A549 (cell line): ENCODE measurements at regions of chr10 and their contacts with region 1.

Region 1: GRCh38 chr10:103244663-103245271 is 920 bp upstream of the RPEL1 start:
- DNase-seq: peak; percentile 90 to 94
- ATAC-seq: peak; percentile 36 to 57; a peak in 4 of 6 replicates
- H3K4me3 ChIP-seq: no peak overlapping the region
- H3K27ac ChIP-seq: peak overlapping the region; percentile 96 to 100
- H3K4me1 ChIP-seq: peaks cover 40% of the 10 kb centered on the region
- CTCF ChIP-seq: peak; percentile 84
- EP300 ChIP-seq: no peak
- POLR2A ChIP-seq: no peak
- RAD21 ChIP-seq: peak; percentile 95 to 98

Region 2: GRCh38 chr10:103086261-103086660 is 158.5 kb before region 1 on chr10:
- CTCF ChIA-PET with region 1: interaction called, 27 read pairs
- POLR2A ChIA-PET with region 1: interaction called, 6 read pairs
- DNase-seq: no peak
- ATAC-seq: no peak
- H3K4me3 ChIP-seq: no peak overlapping the region
- H3K27ac ChIP-seq: no peak overlapping the region
- H3K4me1 ChIP-seq: no peaks in the 10 kb centered on the region
- CTCF ChIP-seq: no peak
- EP300 ChIP-seq: no peak
- POLR2A ChIP-seq: no peak
- RAD21 ChIP-seq: no peak

Region 3: DNA sequence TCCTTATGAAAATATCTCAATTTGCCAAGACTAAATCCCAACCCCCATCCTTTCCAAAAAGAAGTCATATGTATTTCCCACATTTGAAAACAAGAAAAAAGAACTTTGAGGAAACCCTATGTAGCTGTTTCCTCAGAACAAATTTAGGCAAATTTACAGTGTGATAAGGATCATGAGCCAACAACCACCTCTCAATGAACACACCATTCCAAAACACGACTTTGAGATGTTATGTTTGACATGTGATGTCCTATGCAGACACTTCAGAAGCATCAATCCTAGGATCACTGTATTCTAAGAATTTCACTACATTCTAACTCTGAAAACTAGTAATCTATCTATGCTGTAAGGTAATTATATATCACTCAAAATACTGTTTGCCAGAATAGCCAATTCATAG is 113.9 kb before region 1 on chr10:
- CTCF ChIA-PET with region 1: interaction called, 14 read pairs
- POLR2A ChIA-PET with region 1: no interaction called
- DNase-seq: no peak
- ATAC-seq: no peak; a peak in 1 of 6 replicates
- H3K4me3 ChIP-seq: no peak overlapping the region
- H3K27ac ChIP-seq: 0 out of 6 replicates have a peak overlapping the region, but pooled peaks of 1 of the 2 experiments have one; percentile 2
- H3K4me1 ChIP-seq: peaks cover 18% of the 10 kb centered on the region; the same call in 2 of the 3 replicates
- CTCF ChIP-seq: no peak
- EP300 ChIP-seq: no peak
- POLR2A ChIP-seq: no peak
- RAD21 ChIP-seq: no peak

Region 4: GRCh38 chr10:103175580-103176285 is 69.0 kb before region 1 on chr10:
- CTCF ChIA-PET with region 1: interaction called, 20 read pairs
- POLR2A ChIA-PET with region 1: interaction called, 3 read pairs
- DNase-seq: no peak
- ATAC-seq: peak; percentile 57 to 67
- H3K4me3 ChIP-seq: no peak overlapping the region
- H3K27ac ChIP-seq: peak overlapping the region in 1 of 2 experiments; percentile 50; a peak in 3 of 6 replicates
- H3K4me1 ChIP-seq: peaks cover 30% of the 10 kb centered on the region
- CTCF ChIP-seq: no peak
- EP300 ChIP-seq: no peak
- POLR2A ChIP-seq: no peak
- RAD21 ChIP-seq: no peak

Region 5: GRCh38 chr10:103225939-103226338 is 18.8 kb before region 1 on chr10:
- CTCF ChIA-PET with region 1: interaction called, 41 read pairs
- POLR2A ChIA-PET with region 1: interaction called, 60 read pairs
- DNase-seq: no peak
- ATAC-seq: no peak
- H3K4me3 ChIP-seq: no peak overlapping the region
- H3K27ac ChIP-seq: peak overlapping the region; percentile 13 to 96; a peak in 3 of 6 replicates
- H3K4me1 ChIP-seq: peaks cover 38% of the 10 kb centered on the region
- CTCF ChIP-seq: no peak
- EP300 ChIP-seq: no peak
- POLR2A ChIP-seq: no peak
- RAD21 ChIP-seq: no peak

Region 6: GRCh38 chr10:103333925-103334520 is 89.3 kb after region 1 on chr10:
- CTCF ChIA-PET with region 1: interaction called, 29 read pairs
- POLR2A ChIA-PET with region 1: no interaction called
- DNase-seq: peak; percentile 34 to 35
- ATAC-seq: no peak
- H3K4me3 ChIP-seq: no peak overlapping the region
- H3K27ac ChIP-seq: no peak overlapping the region
- H3K4me1 ChIP-seq: no peaks in the 10 kb centered on the region
- CTCF ChIP-seq: peak; percentile 69; the same call in 2 of the 3 replicates
- EP300 ChIP-seq: no peak
- POLR2A ChIP-seq: no peak
- RAD21 ChIP-seq: peak; percentile 60 to 79